PC-3 (cell line): ENCODE measurements at regions of chr7 and their contacts with region 1.

Region 1: GRCh38 chr7:29285444-29285793 is 90.8 kb downstream of the CHN2 start:
- DNase-seq: peak; percentile 97
- ATAC-seq: peak; percentile 85
- H3K4me3 ChIP-seq: no peak overlapping the region
- H3K27ac ChIP-seq: peak overlapping the region; percentile 89
- H3K4me1 ChIP-seq: peaks cover 45% of the 10 kb centered on the region
- H3K27me3 ChIP-seq: no peaks in the 10 kb centered on the region
- CTCF ChIP-seq: no peak

Region 2: GRCh38 chr7:29113384-29114103 is 171.9 kb before region 1 on chr7:
- CTCF ChIA-PET with region 1: no interaction called
- POLR2A ChIA-PET with region 1: no interaction called
- intact Hi-C with region 1: loop called (anchors 1 kb)
- DNase-seq: peak; percentile 89
- ATAC-seq: peak; percentile 90
- H3K4me3 ChIP-seq: peak overlapping the region; percentile 1; the same call in 1 of the 2 replicates
- H3K27ac ChIP-seq: peak overlapping the region; percentile 76
- H3K4me1 ChIP-seq: peaks cover 51% of the 10 kb centered on the region
- H3K27me3 ChIP-seq: no peaks in the 10 kb centered on the region
- CTCF ChIP-seq: peak; percentile 74

Region 3: GRCh38 chr7:29146057-29146706 is 139.2 kb before region 1 on chr7 and contains the start of gene CPVL:
- CTCF ChIA-PET with region 1: no interaction called
- POLR2A ChIA-PET with region 1: no interaction called
- intact Hi-C with region 1: no loop called
- DNase-seq: peak; percentile 73
- ATAC-seq: peak; percentile 75
- H3K4me3 ChIP-seq: peak within 1 kb of the TSS; percentile 73
- H3K27ac ChIP-seq: peak within 1 kb of the TSS; percentile 13; the same call in 1 of the 2 replicates
- H3K4me1 ChIP-seq: peaks cover 17% of the 10 kb centered on the region
- H3K27me3 ChIP-seq: no peaks in the 10 kb centered on the region
- CTCF ChIP-seq: no peak
- total RNA-seq, gene CPVL: 14.7 and 15.3 TPM in 2 replicates

Region 4: DNA sequence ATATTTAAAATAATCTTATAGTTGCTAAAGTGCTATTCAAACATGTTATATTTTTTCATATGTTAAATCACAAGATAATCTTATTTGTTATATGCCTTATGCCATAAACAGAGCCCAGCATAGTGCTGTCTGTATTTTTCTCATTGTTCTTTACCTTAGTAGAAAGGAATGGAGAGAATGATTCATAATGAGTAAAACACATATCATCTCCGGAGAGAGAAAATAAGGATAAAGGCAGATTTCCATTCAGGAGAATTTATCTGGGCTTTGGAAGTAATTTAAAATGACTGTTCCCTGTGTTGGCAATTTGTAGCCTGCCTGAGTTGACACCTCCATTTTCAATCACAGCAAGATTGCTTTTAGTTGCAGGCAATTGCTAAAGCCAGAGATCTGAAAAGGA is 60.7 kb before region 1 on chr7:
- CTCF ChIA-PET with region 1: no interaction called
- POLR2A ChIA-PET with region 1: no interaction called
- intact Hi-C with region 1: loop called (anchors 1 kb)
- DNase-seq: peak; percentile 76
- ATAC-seq: peak; percentile 97
- H3K4me3 ChIP-seq: no peak overlapping the region
- H3K27ac ChIP-seq: peak overlapping the region; percentile 67
- H3K4me1 ChIP-seq: peaks cover 31% of the 10 kb centered on the region
- H3K27me3 ChIP-seq: no peaks in the 10 kb centered on the region
- CTCF ChIP-seq: no peak

Region 5: GRCh38 chr7:29255906-29256782 is 29.3 kb before region 1 on chr7:
- CTCF ChIA-PET with region 1: no interaction called
- POLR2A ChIA-PET with region 1: no interaction called
- intact Hi-C with region 1: loop called (anchors 2 kb)
- DNase-seq: peak; percentile 66
- ATAC-seq: peak; percentile 68
- H3K4me3 ChIP-seq: peak overlapping the region; percentile 6; the same call in 1 of the 2 replicates
- H3K27ac ChIP-seq: peak overlapping the region; percentile 66
- H3K4me1 ChIP-seq: peaks cover 22% of the 10 kb centered on the region
- H3K27me3 ChIP-seq: no peaks in the 10 kb centered on the region
- CTCF ChIP-seq: no peak

Region 6: GRCh38 chr7:29297194-29297890 is 11.9 kb after region 1 on chr7:
- CTCF ChIA-PET with region 1: no interaction called
- POLR2A ChIA-PET with region 1: interaction called, 11 read pairs
- intact Hi-C with region 1: loop called (anchors 1 kb)
- DNase-seq: no peak
- ATAC-seq: no peak
- H3K4me3 ChIP-seq: no peak overlapping the region
- H3K27ac ChIP-seq: no peak overlapping the region
- H3K4me1 ChIP-seq: peaks cover 22% of the 10 kb centered on the region
- H3K27me3 ChIP-seq: no peaks in the 10 kb centered on the region
- CTCF ChIP-seq: peak; percentile 53

Region 7: DNA sequence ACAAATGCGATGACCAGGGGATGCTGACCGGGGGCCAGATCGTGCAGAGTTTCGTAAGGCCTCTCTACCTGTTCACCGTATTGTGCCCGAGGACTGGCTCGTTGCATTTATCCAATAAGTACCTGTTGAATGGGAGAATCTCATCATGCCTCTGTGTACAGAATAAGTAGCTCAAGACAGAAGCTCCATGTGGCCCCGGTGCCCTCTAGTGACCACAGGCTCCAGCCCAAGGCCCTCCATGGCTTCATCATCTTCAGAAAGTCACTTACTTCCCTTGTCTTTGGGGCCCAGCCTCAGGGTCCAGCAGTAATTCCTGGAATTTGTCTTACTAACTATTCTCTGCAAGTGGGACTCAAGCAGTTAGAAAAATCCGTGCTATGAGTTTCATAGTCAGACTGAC is 60.2 kb after region 1 on chr7:
- CTCF ChIA-PET with region 1: no interaction called
- POLR2A ChIA-PET with region 1: no interaction called
- intact Hi-C with region 1: loop called (anchors 5 kb)
- DNase-seq: peak; percentile 57
- ATAC-seq: peak; percentile 53
- H3K4me3 ChIP-seq: no peak overlapping the region
- H3K27ac ChIP-seq: no peak overlapping the region
- H3K4me1 ChIP-seq: peaks cover 19% of the 10 kb centered on the region
- H3K27me3 ChIP-seq: no peaks in the 10 kb centered on the region
- CTCF ChIP-seq: peak; percentile 65